HepG2 (cell line): ENCODE measurements at regions of chr9 and their contacts with region 1.

Region 1: DNA sequence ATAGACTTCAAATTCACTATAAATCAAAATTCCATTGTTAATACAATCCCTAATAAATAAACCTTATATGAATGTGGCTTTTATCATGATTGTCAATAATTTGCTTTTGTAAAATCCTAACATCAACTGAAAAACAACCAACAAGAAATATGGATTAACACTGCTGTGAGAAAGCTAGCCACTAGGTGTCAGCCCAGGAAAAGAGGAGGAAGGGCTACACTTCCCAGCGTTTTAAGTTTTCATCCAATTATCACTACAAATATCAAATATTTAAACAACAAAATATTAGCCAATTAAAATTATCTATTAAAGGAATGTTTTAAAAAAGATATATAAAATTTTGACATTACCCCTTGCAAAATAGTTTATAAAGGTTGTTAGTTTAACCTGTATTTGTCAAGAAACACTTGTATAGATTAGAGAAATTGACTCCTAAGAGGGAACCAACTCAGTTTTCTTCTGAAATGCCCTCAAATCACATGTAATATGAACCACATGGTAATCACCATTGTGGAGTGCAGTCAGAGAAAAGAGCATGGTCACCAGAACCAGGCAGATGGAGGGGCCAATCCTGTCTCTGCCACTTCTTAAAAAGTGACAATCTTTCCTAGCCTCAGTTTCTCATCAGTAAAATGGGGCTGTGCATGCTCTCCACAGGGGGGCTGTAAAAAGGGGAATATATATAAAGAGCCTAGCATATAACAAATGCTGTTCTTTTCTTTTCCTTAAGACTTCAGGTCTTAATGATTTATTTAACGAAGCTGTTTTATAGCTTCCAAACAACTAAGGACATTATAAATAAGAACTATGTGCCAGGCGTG is 188.2 kb downstream of the CRB2 start:
- DNase-seq: peak; percentile 14
- ATAC-seq: peak; percentile 54; the same call in 2 of the 3 replicates
- H3K4me3 ChIP-seq: no peak overlapping the region
- H3K27ac ChIP-seq: no peak overlapping the region
- H3K4me1 ChIP-seq: peaks cover 17% of the 10 kb centered on the region
- H3K27me3 ChIP-seq: no peaks in the 10 kb centered on the region
- CTCF ChIP-seq: peak; percentile 65
- EP300 ChIP-seq: no peak
- POLR2A ChIP-seq: no peak
- RAD21 ChIP-seq: peak; percentile 36; the same call in 1 of the 2 replicates

Region 2: GRCh38 chr9:123562844-123563346 is 18.7 kb after region 1 on chr9:
- CTCF ChIA-PET with region 1: no interaction called
- POLR2A ChIA-PET with region 1: no interaction called
- in situ Hi-C with region 1: no loop called
- intact Hi-C with region 1: no loop called
- DNase-seq: no peak
- ATAC-seq: no peak
- H3K4me3 ChIP-seq: no peak overlapping the region
- H3K27ac ChIP-seq: no peak overlapping the region
- H3K4me1 ChIP-seq: peaks cover 12% of the 10 kb centered on the region
- H3K27me3 ChIP-seq: no peaks in the 10 kb centered on the region
- CTCF ChIP-seq: no peak
- EP300 ChIP-seq: no peak
- POLR2A ChIP-seq: no peak
- RAD21 ChIP-seq: no peak

Region 3: DNA sequence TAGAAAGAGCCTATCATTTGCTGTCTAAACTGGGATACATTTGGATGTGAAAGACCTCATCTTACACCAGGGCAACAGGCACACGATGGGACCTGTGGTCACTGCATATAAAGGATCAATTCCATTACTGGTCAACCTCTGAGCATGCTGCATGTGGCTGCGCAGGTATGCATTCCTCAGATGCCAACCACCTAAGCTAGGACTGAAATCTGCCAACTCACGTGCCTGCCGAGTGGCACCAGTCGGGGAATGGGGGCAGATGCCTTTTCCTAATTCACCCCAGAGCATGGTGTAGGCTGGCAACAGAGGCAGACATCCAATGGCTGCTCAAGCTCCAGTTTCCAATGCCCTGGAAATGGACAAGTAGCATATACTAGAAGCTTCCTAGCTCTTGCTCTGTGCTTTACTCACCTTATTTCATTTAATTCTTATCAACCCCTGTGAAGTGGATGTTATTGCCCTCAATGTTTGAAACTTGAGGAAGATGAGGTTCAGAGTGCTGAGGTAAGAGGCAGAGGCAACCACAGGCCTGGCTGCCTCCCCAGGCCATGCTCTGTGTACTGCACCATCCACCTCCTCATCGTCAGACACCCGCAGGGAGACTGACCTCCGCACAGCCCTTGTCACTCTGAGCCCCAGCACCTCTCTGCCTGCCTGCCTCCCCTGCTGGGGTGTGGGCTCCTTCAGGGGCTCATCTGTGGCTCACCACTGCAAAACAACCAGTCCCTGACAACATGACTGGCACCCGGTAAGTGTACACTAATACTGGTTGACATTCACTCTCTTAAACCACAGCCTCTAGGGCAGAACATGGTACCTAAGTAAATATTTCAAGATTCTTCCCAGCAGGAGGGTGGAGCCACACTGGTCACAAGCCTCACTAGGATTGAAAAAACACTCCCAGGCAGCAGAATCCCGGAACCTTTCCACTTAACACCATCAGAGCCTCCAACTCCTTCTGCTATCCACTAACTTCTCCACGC is 40.3 kb after region 1 on chr9:
- CTCF ChIA-PET with region 1: no interaction called
- POLR2A ChIA-PET with region 1: no interaction called
- in situ Hi-C with region 1: no loop called
- intact Hi-C with region 1: no loop called
- DNase-seq: no peak
- ATAC-seq: no peak
- H3K4me3 ChIP-seq: no peak overlapping the region
- H3K27ac ChIP-seq: no peak overlapping the region
- H3K4me1 ChIP-seq: no peaks in the 10 kb centered on the region
- H3K27me3 ChIP-seq: no peaks in the 10 kb centered on the region
- CTCF ChIP-seq: no peak
- EP300 ChIP-seq: no peak
- POLR2A ChIP-seq: no peak
- RAD21 ChIP-seq: no peak

Region 4: DNA sequence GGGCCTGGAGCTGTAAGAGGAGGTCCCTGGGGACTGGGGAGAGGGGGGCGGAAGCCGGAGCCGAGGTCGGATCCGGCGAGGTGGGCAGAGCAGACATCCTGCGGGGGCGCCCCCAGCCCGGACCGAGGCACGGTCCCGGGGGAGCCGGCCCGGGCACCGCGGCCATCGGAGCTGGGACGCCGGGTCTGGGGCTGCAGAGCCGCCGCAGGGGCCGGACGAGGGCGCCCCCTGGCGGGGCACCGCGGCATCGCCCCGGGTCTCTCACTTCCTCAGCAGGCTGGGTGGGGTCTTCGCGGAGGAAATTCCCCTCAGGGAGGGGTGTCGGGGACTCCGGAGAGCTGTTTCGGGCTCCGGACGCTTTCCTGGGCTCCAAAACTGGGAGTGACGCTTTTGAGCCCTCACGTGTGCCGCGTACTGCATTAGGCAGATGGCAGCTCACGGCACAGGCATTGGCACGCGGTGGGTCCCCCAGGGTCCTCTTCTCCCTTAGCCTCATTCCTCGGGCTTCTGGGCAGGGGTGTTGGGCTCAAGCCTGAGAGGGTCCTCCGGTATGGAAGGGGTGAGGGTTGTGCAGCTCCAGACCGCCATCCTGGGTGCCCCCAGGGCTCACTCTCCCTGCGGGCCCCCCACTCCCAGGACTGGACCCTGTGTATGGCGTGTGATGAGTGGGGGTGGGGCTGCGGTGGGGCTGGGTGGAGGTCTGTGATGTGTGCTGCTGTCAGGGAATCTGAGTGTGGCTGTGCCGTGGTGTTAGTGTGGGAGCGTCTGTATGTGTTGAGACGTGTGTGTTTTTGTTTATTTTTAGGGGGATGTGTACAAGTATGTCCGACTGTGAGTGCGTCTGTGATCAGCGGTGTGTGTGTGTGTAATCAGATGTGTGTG is 497.0 kb after region 1 on chr9:
- CTCF ChIA-PET with region 1: interaction called, 6 read pairs
- POLR2A ChIA-PET with region 1: no interaction called
- in situ Hi-C with region 1: loop called (anchors 5 kb)
- intact Hi-C with region 1: no loop called
- DNase-seq: no peak
- ATAC-seq: peak; percentile 58
- H3K4me3 ChIP-seq: peak overlapping the region; percentile 52 to 75 (median 55)
- H3K27ac ChIP-seq: no peak overlapping the region
- H3K4me1 ChIP-seq: peaks cover 57% of the 10 kb centered on the region
- H3K27me3 ChIP-seq: peaks cover 4 to 57% of the 10 kb centered on the region in 2 experiments; a peak in 4 of 5 replicates
- CTCF ChIP-seq: peak; percentile 80
- EP300 ChIP-seq: no peak
- POLR2A ChIP-seq: no peak
- RAD21 ChIP-seq: peak; percentile 88